GM12878 (cell line): ENCODE measurements at regions of chr17 and their contacts with region 1.

Region 1: DNA sequence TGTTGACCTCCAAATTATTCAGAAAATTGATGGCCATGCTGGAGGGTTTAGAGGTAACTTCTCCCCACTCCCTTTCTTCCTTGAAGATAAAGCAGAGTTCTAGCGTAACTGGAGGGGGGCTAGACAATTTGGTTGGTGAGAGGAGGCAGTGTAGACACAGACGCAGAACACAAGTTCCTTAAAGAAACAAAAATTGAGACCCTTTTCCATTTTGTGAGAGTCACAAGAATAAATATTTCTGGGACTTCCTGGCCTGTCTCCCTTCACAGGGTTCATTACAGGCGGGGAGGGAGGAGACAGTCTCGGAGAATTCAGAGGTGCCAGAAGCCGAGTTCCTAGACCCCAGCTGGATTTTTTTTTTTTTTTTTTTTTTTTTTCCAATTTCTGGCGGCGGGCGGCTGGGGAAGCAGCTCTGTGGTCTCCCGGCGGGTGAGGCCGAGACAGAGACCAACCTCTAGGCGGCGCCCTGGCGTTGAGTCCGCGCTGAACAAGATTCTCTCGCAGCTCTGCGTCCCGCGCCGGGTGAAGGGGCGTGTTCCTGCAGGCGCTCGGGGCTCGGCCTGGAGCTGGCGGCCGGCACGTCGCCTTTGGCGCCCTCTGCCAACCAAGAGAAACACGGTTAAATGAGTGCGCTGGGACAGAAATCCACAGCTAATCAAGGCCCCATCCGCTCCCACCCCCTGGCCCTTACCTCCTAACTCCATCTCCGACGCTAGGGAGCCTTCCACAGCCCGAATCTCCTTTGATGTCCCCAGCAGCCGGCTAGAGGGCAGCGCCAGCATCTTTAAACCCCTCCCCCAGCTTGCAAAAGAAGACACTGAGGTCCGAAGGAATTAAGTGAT is 10.2 kb upstream of the HOXB9 start:
- DNase-seq: no peak
- ATAC-seq: peak; percentile 93
- H3K4me3 ChIP-seq: no peak overlapping the region
- H3K27ac ChIP-seq: no peak overlapping the region
- H3K4me1 ChIP-seq: peaks cover 17% of the 10 kb centered on the region
- H3K27me3 ChIP-seq: peaks cover 3 to 18% of the 10 kb centered on the region in 2 experiments
- CTCF ChIP-seq: peak; percentile 66 to 84 (median 74)
- EP300 ChIP-seq: no peak
- POLR2A ChIP-seq: no peak
- RAD21 ChIP-seq: no peak

Region 2: DNA sequence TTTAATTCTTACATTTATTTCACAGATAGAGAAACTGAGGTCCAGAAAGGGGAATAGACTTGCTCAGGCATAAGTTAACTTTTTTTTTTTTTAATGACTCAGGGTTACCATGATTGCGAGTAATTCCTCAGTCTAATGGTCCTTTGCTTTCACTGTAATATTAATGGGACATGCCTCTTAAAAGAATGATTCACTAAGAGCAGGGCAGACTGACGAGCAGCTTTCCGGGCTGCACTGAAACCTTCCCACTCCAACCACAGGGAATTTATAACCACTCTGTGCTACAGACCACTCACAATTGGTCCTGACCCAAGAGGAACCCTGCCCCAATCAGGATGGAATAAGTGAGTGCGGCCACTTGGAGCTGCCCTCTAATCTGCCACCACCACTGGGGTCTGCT is 97.2 kb before region 1 on chr17:
- CTCF ChIA-PET with region 1: no interaction called
- POLR2A ChIA-PET with region 1: no interaction called
- RAD21 ChIA-PET with region 1: no interaction called
- SMC1A ChIA-PET with region 1: no interaction called
- in situ Hi-C with region 1: no loop called
- intact Hi-C with region 1: no loop called
- DNase-seq: no peak
- ATAC-seq: no peak
- H3K4me3 ChIP-seq: no peak overlapping the region
- H3K27ac ChIP-seq: no peak overlapping the region
- H3K4me1 ChIP-seq: no peaks in the 10 kb centered on the region
- H3K27me3 ChIP-seq: peaks cover 0 to 4% of the 10 kb centered on the region in 2 experiments; a peak in 1 of 4 replicates
- CTCF ChIP-seq: no peak
- EP300 ChIP-seq: no peak
- POLR2A ChIP-seq: no peak
- RAD21 ChIP-seq: no peak

Region 3: GRCh38 chr17:48625495-48626244 is 10.7 kb before region 1 on chr17:
- CTCF ChIA-PET with region 1: interaction called, 16 read pairs
- POLR2A ChIA-PET with region 1: no interaction called
- RAD21 ChIA-PET with region 1: interaction called, 4 read pairs
- SMC1A ChIA-PET with region 1: interaction called, 3 read pairs
- in situ Hi-C with region 1: no loop called
- intact Hi-C with region 1: no loop called
- DNase-seq: no peak
- ATAC-seq: peak; percentile 87
- H3K4me3 ChIP-seq: peak overlapping the region; percentile 65
- H3K27ac ChIP-seq: no peak overlapping the region
- H3K4me1 ChIP-seq: no peaks in the 10 kb centered on the region
- H3K27me3 ChIP-seq: peaks cover 36% of the 10 kb centered on the region in 2 experiments
- CTCF ChIP-seq: no peak
- EP300 ChIP-seq: no peak
- POLR2A ChIP-seq: no peak
- RAD21 ChIP-seq: no peak

Region 4: DNA sequence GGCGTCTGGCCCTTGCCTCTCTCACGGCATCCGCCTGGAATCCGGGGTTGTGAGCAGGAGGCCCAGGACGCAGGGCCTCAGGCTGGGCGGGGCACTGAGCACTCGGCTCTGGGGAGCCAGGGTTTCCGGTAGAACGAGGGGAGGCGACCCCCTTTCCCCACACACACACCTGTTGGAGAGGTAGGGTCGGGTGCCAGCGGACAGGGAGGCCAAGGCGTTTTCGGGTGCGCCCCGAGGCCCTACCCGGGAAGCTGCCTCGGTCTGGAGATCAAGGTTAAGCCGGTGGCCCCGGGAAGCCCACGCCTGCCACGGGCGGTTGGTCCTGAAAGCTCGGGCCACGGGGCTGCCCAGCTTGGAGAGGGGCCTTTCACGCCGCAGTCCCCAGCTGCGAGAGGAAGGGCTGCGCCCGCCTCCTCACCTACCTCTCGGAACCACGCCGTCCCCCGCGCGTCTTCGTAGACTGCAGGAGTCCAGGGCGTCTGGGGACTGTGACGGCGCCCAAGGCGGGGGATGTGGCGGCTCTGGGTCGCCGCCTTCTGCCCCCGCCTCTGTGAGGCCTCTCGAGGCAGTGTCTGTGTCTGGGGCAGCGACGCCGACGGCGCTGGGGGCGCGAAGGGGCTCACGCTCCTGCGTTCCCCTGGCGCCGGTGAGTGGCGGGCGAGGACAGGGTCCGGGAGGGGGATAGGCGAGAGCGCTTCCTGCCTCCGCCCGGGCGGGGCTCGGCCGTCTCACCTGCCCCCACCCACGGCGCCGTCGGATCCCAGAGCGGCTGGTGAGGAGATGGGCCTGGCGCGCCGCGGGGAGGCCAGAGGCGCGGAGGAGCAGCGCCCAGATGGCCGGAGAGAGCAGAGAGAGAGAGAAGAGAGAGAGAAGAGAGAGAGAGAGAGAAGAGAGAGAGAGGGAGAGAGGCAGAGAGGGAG is 10.0 kb after region 1 on chr17:
- CTCF ChIA-PET with region 1: interaction called, 10 read pairs
- POLR2A ChIA-PET with region 1: no interaction called
- RAD21 ChIA-PET with region 1: interaction called, 5 read pairs
- SMC1A ChIA-PET with region 1: interaction called, 3 read pairs
- in situ Hi-C with region 1: no loop called
- intact Hi-C with region 1: no loop called
- DNase-seq: no peak
- ATAC-seq: peak; percentile 82
- H3K4me3 ChIP-seq: peak overlapping the region; percentile 3; the same call in 1 of the 2 replicates
- H3K27ac ChIP-seq: no peak overlapping the region
- H3K4me1 ChIP-seq: peaks cover 7% of the 10 kb centered on the region
- H3K27me3 ChIP-seq: peaks cover 8 to 9% of the 10 kb centered on the region in 2 experiments
- CTCF ChIP-seq: no peak
- EP300 ChIP-seq: no peak
- POLR2A ChIP-seq: no peak
- RAD21 ChIP-seq: no peak

Region 5: GRCh38 chr17:48655913-48656312 is 19.5 kb after region 1 on chr17:
- CTCF ChIA-PET with region 1: interaction called, 12 read pairs
- POLR2A ChIA-PET with region 1: interaction called, 3 read pairs
- RAD21 ChIA-PET with region 1: interaction called, 3 read pairs
- SMC1A ChIA-PET with region 1: interaction called, 3 read pairs
- in situ Hi-C with region 1: no loop called
- intact Hi-C with region 1: no loop called
- DNase-seq: no peak
- ATAC-seq: no peak
- H3K4me3 ChIP-seq: no peak overlapping the region
- H3K27ac ChIP-seq: no peak overlapping the region
- H3K4me1 ChIP-seq: no peaks in the 10 kb centered on the region
- H3K27me3 ChIP-seq: no peaks in the 10 kb centered on the region; a peak in 1 of 4 replicates
- CTCF ChIP-seq: no peak
- EP300 ChIP-seq: no peak
- POLR2A ChIP-seq: no peak
- RAD21 ChIP-seq: no peak

Region 6: DNA sequence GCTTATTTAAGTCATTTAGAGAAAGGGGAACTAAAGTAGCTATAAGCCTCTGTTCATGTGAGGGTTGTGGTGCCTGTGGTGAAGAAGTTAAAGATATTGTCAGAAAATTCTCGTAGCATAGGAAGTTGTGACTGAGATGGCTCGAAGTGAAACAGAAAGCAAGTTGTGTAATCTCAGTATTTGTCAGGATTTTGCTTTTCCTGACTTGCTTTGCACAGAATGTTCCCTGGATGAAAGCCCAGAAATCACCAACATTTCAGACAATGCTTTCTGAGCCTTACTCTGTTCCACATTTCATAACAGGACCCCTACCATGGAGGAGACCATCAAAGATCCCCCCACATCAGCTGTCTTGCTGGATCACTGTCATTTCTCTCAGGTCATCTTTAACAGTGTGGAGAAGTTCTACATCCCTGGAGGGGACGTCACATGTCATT is 205.0 kb after region 1 on chr17:
- CTCF ChIA-PET with region 1: no interaction called
- POLR2A ChIA-PET with region 1: no interaction called
- RAD21 ChIA-PET with region 1: no interaction called
- SMC1A ChIA-PET with region 1: no interaction called
- in situ Hi-C with region 1: no loop called
- intact Hi-C with region 1: no loop called
- DNase-seq: peak; percentile 83
- ATAC-seq: peak; percentile 91
- H3K4me3 ChIP-seq: peak overlapping the region; percentile 60
- H3K27ac ChIP-seq: peak overlapping the region; percentile 71
- H3K4me1 ChIP-seq: peaks cover 33% of the 10 kb centered on the region
- H3K27me3 ChIP-seq: no peaks in the 10 kb centered on the region
- CTCF ChIP-seq: no peak
- EP300 ChIP-seq: peak in 1 of 2 experiments; percentile 77; a peak in 1 of 4 replicates
- POLR2A ChIP-seq: no peak
- RAD21 ChIP-seq: no peak

Region 7: DNA sequence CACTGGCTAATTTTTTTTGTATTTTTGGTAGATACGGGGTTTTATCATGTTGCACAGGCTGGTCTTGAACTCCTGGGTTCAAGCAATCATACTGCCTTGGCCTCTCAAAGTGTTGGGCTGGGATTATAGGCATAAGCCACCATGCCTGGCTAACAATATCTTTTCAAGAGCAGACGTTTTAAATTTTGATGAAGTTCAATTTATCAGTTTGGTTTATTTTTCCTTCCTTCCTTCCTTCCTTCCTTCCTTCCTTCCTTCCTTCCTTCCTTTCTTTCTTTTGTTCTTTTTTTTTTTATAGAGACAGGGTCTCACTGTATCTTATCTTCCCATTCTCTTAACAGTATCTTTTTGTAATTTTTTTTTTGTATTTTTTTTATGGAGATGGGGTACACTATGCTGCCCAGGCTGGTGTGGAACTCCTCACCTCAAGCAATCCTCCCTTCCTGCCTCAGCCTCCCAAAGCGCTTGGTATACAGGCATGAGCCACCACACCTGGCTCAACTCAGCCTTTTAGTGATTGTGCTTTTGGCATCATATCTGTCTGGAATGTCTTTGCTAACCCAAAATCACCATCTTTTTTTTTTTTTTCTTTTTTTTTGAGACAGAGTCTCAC is 345.6 kb after region 1 on chr17:
- CTCF ChIA-PET with region 1: no interaction called
- POLR2A ChIA-PET with region 1: no interaction called
- RAD21 ChIA-PET with region 1: no interaction called
- SMC1A ChIA-PET with region 1: no interaction called
- in situ Hi-C with region 1: no loop called
- intact Hi-C with region 1: no loop called
- DNase-seq: no peak
- ATAC-seq: no peak
- H3K4me3 ChIP-seq: no peak overlapping the region
- H3K27ac ChIP-seq: no peak overlapping the region
- H3K4me1 ChIP-seq: no peaks in the 10 kb centered on the region
- H3K27me3 ChIP-seq: no peaks in the 10 kb centered on the region
- CTCF ChIP-seq: no peak
- EP300 ChIP-seq: no peak
- POLR2A ChIP-seq: no peak
- RAD21 ChIP-seq: no peak